ENCODE measurements at regions of chrX and their contacts with region 1.

Region 1: DNA sequence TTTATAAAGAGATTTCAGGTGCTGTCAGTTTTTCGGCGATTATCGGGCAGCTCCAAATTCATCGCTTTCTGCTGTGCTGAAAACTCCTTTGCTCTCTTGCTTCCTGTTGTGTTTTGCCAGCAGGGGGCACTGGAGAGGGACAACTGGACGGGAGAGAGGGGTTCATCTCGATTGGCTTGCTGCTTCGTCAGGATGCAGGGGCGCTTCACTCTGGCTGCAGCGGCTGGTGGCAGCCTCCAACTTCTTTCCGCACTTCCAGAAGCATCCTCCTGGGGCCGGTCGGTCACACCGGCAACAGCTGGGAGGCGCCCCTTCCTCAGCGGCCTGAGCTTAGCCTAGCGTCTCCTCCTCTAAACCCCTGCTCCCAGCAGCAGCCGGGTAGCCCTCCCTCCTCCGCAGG is 29.5 kb downstream of the MSL3 start:
- DNase-seq: peak; percentile 15
- H3K4me3 ChIP-seq: no peak overlapping the region
- H3K27ac ChIP-seq: no peak overlapping the region
- H3K4me1 ChIP-seq: peaks cover 15% of the 10 kb centered on the region
- CTCF ChIP-seq: peak; percentile 61

Region 2: DNA sequence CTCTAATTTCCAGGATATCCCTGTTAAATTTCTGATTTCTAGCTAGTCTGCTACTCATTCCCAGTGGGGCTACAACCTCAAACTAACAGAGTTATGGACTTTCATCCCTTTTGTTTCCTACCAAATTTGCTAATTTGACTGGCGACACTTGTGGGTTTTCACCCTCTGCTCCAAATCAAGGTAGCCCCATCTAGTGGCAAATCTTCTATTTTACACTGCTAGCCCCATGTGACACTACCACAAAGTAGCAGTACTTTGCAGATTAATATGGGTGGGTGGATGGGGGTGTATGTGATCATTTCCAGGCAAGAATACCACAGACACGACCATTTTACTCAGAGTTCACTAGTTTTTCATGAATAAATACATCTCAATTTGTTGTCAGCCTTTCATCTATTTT is 120.8 kb after region 1 on chrX:
- CTCF ChIA-PET with region 1: no interaction called
- POLR2A ChIA-PET with region 1: no interaction called
- intact Hi-C with region 1: loop called (anchors 2 kb)
- DNase-seq: peak; percentile 17
- H3K4me3 ChIP-seq: no peak overlapping the region
- H3K27ac ChIP-seq: no peak overlapping the region
- H3K4me1 ChIP-seq: no peaks in the 10 kb centered on the region
- CTCF ChIP-seq: peak; percentile 67